Activated T-helper 2 cell treated with anti-CD3 and anti-CD28 coated beads, Interferon-gamma antibody, Interleukin-2, Interleukin-4, amounts not matched to agents 10 μg/mL and 5 μg/mL and 100 μg/mL, durations not matched to agents 14 hours and 24 hours and 36 hours (primary cell): ENCODE measurements at regions of chr9 and their contacts with region 1.

Region 1: GRCh38 chr9:68949271-68950000 is 64.5 kb downstream of the PRKACG start:
- DNase-seq: no peak
- H3K4me3 Mint-ChIP-seq: no peak overlapping the region
- H3K27ac Mint-ChIP-seq: peak overlapping the region; percentile 74
- H3K4me1 Mint-ChIP-seq: peaks cover 72% of the 10 kb centered on the region
- H3K27me3 Mint-ChIP-seq: no peaks in the 10 kb centered on the region

Region 2: DNA sequence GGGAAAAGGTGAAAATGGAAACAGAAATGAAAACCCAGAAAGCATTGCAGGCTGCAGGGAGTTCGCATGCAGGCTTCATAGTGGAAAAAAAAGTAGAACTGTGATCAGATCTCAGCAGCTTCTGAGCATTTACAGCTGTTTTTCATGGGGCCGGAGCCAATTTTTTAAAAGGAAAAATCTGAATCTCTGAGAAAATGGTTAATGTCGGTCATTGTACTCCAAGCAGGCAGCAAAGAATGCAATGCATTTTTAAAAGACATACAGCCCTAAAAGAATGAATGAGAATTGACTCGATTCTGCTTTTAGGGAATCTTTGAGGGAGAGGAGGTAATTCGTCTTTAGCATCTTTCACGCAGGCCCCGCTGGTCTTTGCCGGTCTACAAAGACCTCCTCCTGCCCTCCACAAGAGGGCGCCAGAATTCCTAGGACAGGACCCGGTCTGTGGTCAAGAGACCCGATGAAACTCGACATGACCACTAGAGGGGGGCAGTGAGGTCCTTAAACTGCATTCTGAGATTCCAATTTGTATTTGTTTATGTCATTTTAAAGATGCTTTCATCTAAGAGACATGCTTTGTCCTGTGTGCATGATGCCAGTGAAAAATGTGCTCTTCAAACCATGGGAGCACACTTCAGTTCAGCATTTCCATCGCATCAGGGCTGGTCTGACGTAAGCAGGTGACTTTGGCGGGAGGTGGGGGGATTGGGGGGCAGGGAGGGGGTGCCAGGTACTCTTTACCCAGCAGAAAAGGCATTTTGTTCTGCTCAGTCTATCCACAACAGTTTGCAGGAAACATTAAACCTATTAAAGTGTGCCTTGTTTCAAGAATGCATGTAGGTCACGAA is 365.0 kb before region 1 on chr9:
- intact Hi-C with region 1: loop called (anchors 1 kb)
- DNase-seq: peak; percentile 71
- H3K4me3 Mint-ChIP-seq: no peak overlapping the region
- H3K27ac Mint-ChIP-seq: peak overlapping the region; percentile 44
- H3K4me1 Mint-ChIP-seq: peaks cover 14% of the 10 kb centered on the region
- H3K27me3 Mint-ChIP-seq: no peaks in the 10 kb centered on the region

Region 3: DNA sequence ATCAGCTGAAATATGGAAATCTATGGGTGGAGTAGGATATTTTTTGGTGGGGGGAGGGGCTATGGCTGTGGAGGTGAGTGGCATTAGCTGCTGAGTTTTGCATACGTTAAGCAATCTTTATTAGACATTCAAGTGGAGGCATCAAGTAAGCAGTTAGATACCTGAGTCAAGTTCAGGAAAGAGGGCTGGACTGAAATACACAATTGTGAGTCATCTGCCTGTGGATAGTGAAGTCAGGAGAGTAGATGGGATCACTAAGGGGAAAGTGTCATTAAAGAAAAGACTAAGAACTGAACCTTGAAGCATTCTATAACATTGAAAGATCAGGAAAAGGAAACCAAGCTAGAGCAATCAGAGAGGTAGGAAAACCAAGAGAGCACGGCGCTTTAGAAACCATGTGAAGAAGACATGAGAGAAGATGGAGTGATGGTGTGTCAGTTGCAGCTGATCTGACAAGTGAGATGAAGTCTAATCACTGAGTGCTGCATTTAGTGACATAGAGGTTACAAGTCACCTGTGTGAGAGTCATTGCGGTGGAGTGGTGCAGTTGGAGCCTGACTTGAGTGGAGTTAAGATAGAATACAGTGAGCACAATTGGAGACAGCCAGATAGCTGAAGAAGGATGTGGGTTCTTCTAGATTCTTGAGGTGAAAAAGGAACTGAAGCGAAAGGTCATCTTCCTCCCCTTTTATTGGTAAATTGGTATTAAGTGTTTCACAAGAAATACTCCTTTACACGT is 155.7 kb before region 1 on chr9:
- intact Hi-C with region 1: loop called (anchors 2 kb)
- DNase-seq: peak; percentile 33
- H3K4me3 Mint-ChIP-seq: no peak overlapping the region
- H3K27ac Mint-ChIP-seq: no peak overlapping the region
- H3K4me1 Mint-ChIP-seq: peaks cover 25% of the 10 kb centered on the region
- H3K27me3 Mint-ChIP-seq: no peaks in the 10 kb centered on the region

Region 4: DNA sequence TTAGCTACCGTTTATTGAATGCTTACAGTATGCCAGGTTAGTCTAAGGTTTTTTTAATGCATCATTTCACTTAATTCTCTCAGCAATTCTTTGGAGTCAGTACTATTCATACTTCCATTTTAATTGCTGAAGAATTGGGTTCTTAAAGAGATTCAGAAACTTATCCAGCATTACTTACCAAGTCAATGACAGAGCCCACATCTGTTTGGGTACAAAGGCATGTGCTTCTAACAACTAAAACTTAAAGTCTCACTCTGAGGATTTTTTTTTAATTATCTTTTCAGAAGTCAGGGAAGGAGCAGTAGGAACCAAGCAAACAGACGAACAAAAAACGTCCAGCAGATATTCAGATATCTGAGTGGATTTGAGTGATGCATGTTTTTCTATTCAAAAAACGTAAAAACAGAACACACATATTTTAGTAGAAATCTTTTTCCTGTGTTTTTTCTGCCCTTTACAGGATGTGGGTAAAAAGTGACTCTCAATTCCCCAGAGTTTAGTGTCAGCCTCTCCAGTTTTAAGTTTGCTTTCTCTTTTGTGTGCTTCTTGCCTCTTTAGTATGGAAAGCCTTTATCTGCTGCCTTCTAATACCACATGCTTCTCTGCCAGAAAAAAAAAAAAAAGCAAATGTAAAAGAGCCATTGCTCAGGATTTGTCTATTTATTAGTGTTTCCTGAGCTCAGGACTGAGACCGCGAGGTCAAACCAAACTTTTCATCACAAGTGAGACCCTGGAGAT is 53.5 kb before region 1 on chr9:
- intact Hi-C with region 1: loop called (anchors 1 kb)
- DNase-seq: no peak
- H3K4me3 Mint-ChIP-seq: peak overlapping the region; percentile 78
- H3K27ac Mint-ChIP-seq: peak overlapping the region; percentile 94
- H3K4me1 Mint-ChIP-seq: peaks cover 57% of the 10 kb centered on the region
- H3K27me3 Mint-ChIP-seq: no peaks in the 10 kb centered on the region

Region 5: GRCh38 chr9:68931821-68932220 is 17.6 kb before region 1 on chr9:
- intact Hi-C with region 1: loop called (anchors 1 kb)
- DNase-seq: no peak
- H3K4me3 Mint-ChIP-seq: no peak overlapping the region
- H3K27ac Mint-ChIP-seq: peak overlapping the region; percentile 34
- H3K4me1 Mint-ChIP-seq: peaks cover 43% of the 10 kb centered on the region
- H3K27me3 Mint-ChIP-seq: no peaks in the 10 kb centered on the region

Region 6: GRCh38 chr9:68979538-68980314 is 30.3 kb after region 1 on chr9:
- intact Hi-C with region 1: loop called (anchors 1 kb)
- DNase-seq: peak; percentile 41
- H3K4me3 Mint-ChIP-seq: peak overlapping the region; percentile 55
- H3K27ac Mint-ChIP-seq: peak overlapping the region; percentile 90
- H3K4me1 Mint-ChIP-seq: peaks cover 76% of the 10 kb centered on the region
- H3K27me3 Mint-ChIP-seq: no peaks in the 10 kb centered on the region

Region 7: DNA sequence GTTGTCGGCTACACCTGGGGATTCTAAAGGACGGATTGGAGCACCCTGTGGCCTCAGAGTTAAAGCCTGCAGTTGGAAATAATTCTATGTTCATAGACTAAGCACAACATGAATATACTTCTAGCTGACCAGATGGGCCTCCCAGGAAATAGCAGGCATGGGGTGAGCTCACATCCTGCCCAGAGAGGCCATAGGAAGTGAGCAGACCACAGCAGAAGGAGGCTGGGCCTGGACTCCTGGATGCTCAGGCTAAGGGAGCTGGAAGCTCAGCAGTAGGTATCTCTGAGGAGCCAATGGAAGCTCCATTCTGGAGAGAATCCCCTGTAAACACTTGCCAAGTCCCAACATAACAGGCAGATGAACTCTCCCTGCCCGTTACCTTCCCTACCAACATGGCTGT is 397.6 kb after region 1 on chr9:
- intact Hi-C with region 1: no loop called
- DNase-seq: no peak
- H3K4me3 Mint-ChIP-seq: no peak overlapping the region
- H3K27ac Mint-ChIP-seq: no peak overlapping the region
- H3K4me1 Mint-ChIP-seq: no peaks in the 10 kb centered on the region
- H3K27me3 Mint-ChIP-seq: peaks cover 7% of the 10 kb centered on the region